GM18951 (cell line): ENCODE measurements at regions of chr21 and their contacts with region 1.

Region 1: DNA sequence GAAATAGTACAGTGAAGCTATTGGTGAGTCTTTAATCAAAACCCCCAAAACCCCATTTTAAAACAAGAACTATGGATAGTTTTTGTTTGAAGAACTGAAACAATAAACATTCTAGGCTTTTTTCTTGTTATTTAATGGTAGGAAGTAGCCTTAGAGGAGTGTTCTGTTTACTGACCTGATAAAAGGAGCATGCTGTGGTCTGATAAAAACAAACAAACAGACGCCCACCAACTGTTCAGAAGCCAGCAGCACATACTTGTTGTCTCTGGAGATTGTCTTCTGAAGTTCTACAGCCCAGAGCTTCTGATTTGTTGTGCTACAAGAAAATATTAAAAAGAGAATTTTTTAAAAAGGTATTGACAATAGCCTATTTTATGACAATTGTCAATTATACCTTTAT is 54.1 kb upstream of the CFAP298 start:
- POLR2A ChIP-seq: no peak

Region 2: GRCh38 chr21:32044205-32045180 is 621.8 kb before region 1 on chr21:
- in situ Hi-C with region 1: no loop called
- POLR2A ChIP-seq: no peak

Region 3: GRCh38 chr21:32770871-32771523 is 104.7 kb after region 1 on chr21:
- in situ Hi-C with region 1: no loop called
- POLR2A ChIP-seq: no peak

Region 4: GRCh38 chr21:32819694-32820093 is 153.4 kb after region 1 on chr21:
- in situ Hi-C with region 1: loop called (anchors 10 kb)
- POLR2A ChIP-seq: no peak

Region 5: GRCh38 chr21:32844653-32845436 is 178.6 kb after region 1 on chr21:
- in situ Hi-C with region 1: no loop called
- POLR2A ChIP-seq: no peak